Panc1 (cell line): ENCODE measurements at regions of chr1 and their contacts with region 1.

Region 1: DNA sequence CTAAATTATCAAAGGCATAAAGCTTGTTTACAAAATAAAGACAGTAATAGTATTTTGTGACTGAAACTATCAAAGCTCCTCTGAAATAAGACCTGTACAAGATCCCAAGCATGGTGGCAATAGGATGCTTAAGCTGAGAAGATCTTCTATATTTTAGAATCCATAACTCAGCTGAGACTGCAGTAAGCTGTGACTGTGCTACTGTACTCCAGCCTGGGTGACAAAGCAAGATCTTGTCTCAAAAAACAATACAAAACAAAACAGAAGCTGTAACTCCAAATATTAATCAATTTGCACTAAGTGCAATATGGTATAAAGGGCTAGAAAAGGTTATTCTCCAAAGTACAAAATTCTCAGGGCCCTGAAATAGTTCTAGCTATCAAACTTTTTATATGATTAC is 55.8 kb upstream of the CPLANE2 start:
- DNase-seq: no peak
- ATAC-seq: no peak
- H3K4me3 ChIP-seq: no peak overlapping the region
- H3K27ac ChIP-seq: no peak overlapping the region
- H3K4me1 ChIP-seq: no peaks in the 10 kb centered on the region
- H3K27me3 ChIP-seq: no peaks in the 10 kb centered on the region
- CTCF ChIP-seq: no peak

Region 2: DNA sequence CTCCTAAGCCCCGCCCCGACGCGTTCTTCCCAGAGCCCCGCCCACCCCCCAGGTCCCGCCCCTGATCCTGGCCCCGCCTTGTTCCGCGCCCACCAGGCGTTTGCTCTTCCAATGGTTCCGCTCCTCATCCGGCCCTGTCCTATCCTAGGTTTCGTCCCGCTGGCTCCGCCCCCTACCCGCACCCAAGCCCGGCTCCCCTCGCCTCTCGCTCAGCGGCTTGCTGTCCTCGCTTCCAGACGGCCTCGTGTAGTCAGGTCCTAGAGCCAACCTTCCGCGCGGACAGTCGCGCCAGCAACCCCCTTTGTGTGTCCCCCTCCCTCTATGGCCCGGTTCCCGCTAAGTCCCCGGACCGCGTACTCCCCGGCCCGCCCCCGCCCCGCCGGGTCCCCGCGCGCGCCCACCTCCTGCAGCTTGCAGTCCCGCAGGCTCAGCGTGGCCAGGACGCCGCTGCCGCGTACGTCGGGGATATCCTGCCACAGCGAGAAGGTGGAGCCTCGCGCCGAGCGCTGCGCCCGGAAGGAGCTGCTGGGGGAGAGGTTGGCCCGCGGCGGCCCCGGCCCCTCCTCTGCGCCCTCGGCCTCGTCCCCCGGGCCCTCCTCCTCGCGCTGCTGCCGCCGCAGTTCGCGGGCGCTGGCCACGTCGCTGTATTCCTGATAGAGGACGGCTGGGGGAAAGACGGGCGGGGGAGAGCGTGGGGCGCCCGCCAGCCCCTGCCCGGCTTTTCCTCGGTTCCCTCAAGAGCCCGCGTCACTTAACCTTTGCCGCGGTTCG is 86.0 kb before region 1 on chr1:
- CTCF ChIA-PET with region 1: no interaction called
- POLR2A ChIA-PET with region 1: interaction called, 10 read pairs
- in situ Hi-C with region 1: no loop called
- intact Hi-C with region 1: no loop called
- DNase-seq: peak; percentile 95
- ATAC-seq: peak; percentile 94
- H3K4me3 ChIP-seq: peak overlapping the region; percentile 48 to 86
- H3K27ac ChIP-seq: peak overlapping the region; percentile 83
- H3K4me1 ChIP-seq: peaks cover 24% of the 10 kb centered on the region
- H3K27me3 ChIP-seq: no peaks in the 10 kb centered on the region
- CTCF ChIP-seq: no peak

Region 3: DNA sequence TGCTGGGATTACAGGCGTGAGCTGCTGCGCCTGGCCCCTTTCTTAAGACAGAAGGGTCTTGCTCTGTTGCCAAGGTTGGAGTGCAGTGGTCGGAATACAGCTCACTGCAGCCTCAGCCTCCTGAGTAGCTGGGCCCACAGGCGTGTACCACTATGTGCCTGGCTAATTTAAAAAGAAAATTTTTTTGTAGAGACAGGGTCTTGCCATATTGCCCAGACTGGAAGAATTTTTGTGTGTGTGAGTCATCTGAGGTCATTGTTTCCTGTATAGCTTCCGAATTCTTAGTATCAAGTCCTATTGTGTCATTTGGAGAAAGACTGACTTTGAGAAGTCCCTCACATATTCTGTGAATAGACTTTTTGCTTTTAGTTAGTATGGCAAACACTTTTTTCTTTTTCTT is 79.0 kb after region 1 on chr1:
- CTCF ChIA-PET with region 1: no interaction called
- POLR2A ChIA-PET with region 1: no interaction called
- in situ Hi-C with region 1: no loop called
- intact Hi-C with region 1: no loop called
- DNase-seq: no peak
- ATAC-seq: no peak
- H3K4me3 ChIP-seq: no peak overlapping the region
- H3K27ac ChIP-seq: peak overlapping the region; percentile 14; the same call in 1 of the 2 replicates
- H3K4me1 ChIP-seq: peaks cover 64% of the 10 kb centered on the region
- H3K27me3 ChIP-seq: no peaks in the 10 kb centered on the region
- CTCF ChIP-seq: no peak